Activated T-helper 2 cell treated with anti-CD3 and anti-CD28 coated beads, Interferon-gamma antibody, Interleukin-2, Interleukin-4, amounts not matched to agents 10 μg/mL and 5 μg/mL and 100 μg/mL, durations not matched to agents 14 hours and 24 hours and 36 hours (primary cell): ENCODE measurements at regions of chr3 and their contacts with region 1.

Region 1: GRCh38 chr3:90184861-90185260 is 1077.4 kb downstream of the EPHA3 start:
- DNase-seq: no peak
- H3K4me3 Mint-ChIP-seq: no peak overlapping the region
- H3K27ac Mint-ChIP-seq: no peak overlapping the region
- H3K4me1 Mint-ChIP-seq: no peaks in the 10 kb centered on the region
- H3K27me3 Mint-ChIP-seq: no peaks in the 10 kb centered on the region

Region 2: GRCh38 chr3:88203642-88204055 is 1981.2 kb before region 1 on chr3:
- intact Hi-C with region 1: loop called (anchors 5 kb)
- DNase-seq: no peak
- H3K4me3 Mint-ChIP-seq: no peak overlapping the region
- H3K27ac Mint-ChIP-seq: no peak overlapping the region
- H3K4me1 Mint-ChIP-seq: peaks cover 1% of the 10 kb centered on the region
- H3K27me3 Mint-ChIP-seq: peaks cover 5% of the 10 kb centered on the region

Region 3: DNA sequence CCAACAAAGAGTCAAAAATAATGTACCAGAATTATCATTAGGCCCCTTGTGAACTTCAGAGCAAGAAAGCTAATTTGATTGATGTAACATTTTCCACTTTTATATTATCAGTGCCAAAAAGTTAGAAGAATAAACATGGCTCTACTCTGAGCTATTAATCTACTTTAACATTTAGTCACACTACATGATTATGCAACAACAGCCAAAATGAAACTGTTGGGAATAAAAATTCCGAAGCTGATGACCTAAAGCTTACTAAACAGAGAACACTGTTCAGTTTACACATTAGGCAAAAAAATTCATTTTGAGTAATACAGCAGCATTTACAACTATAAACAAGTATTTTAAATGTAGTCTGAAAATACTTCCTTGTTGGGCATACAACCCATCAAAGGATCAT is 56.6 kb after region 1 on chr3:
- intact Hi-C with region 1: no loop called
- DNase-seq: no peak
- H3K4me3 Mint-ChIP-seq: no peak overlapping the region
- H3K27ac Mint-ChIP-seq: no peak overlapping the region
- H3K4me1 Mint-ChIP-seq: no peaks in the 10 kb centered on the region
- H3K27me3 Mint-ChIP-seq: no peaks in the 10 kb centered on the region

Region 4: DNA sequence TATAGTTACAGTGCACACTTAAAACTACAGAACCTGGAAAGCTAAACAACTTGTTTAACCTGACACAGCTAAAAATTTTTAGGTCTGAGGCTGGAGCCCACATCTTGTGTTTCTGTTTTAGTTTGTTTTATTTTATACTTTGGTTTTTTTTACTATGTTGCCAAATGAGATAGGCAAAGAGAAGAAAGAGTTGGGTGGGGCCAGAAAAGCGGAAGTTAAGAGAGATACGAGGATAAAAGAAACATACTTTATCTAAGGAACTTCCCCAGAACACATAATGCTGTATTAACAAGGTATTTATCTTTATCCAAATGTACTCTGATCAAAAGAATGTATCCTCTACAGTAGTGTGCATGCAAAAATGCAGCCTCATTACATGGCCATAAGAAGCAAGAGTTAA is 68.3 kb after region 1 on chr3:
- intact Hi-C with region 1: no loop called
- DNase-seq: no peak
- H3K4me3 Mint-ChIP-seq: no peak overlapping the region
- H3K27ac Mint-ChIP-seq: no peak overlapping the region
- H3K4me1 Mint-ChIP-seq: no peaks in the 10 kb centered on the region
- H3K27me3 Mint-ChIP-seq: no peaks in the 10 kb centered on the region